ENCODE measurements at regions of chr21 and their contacts with region 1.

Region 1: GRCh38 chr21:24727803-24728440 is 879.4 kb downstream of the MRPL39 start:
- DNase-seq: no peak
- ATAC-seq: no peak
- H3K4me3 ChIP-seq: no peak overlapping the region
- H3K27ac ChIP-seq: no peak overlapping the region
- H3K4me1 ChIP-seq: no peaks in the 10 kb centered on the region
- H3K27me3 ChIP-seq: no peaks in the 10 kb centered on the region
- CTCF ChIP-seq: no peak
- POLR2A ChIP-seq: no peak

Region 2: DNA sequence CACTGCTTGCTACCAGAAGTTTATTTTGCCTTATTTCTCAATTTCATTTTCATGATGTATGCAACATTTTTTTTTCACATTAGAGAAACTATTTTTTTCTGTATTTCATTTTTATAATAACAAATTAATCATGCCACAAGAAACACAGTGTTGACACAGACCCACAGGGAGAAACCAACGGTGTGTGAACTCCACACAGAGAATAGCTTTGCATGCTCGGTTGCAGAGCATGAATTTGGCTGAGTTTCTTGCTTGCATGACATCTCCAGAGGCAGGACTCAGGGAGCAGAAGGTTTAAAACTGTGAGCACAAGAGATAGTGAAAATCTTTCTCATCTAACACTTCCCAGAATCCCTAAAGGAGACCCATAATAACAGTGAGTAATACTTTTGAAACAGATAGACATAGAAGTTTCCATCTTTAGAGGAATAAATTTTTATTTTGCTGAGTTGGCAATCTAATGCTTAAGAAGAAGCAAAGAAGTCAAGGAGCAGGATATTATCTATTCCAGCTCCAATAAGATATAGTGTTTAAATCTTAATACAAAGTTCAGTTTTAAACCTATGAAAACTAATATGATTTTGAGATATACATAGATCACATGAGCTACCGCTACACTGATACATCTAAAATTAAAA is 11.5 kb before region 1 on chr21:
- intact Hi-C with region 1: loop called in 1 of 10 experiments (anchors 2 kb)
- DNase-seq: no peak
- ATAC-seq: no peak
- H3K4me3 ChIP-seq: no peak overlapping the region
- H3K27ac ChIP-seq: no peak overlapping the region
- H3K4me1 ChIP-seq: no peaks in the 10 kb centered on the region
- H3K27me3 ChIP-seq: no peaks in the 10 kb centered on the region
- CTCF ChIP-seq: no peak
- POLR2A ChIP-seq: no peak

Measured in heart left ventricle (tissue), 16 donors.